GM12878 (cell line): ENCODE measurements at regions of chr7 and their contacts with region 1.

Region 1: GRCh38 chr7:94087664-94088352 is 83.7 kb upstream of the BET1 start:
- DNase-seq: peak; percentile 66
- ATAC-seq: peak; percentile 97
- H3K4me3 ChIP-seq: no peak overlapping the region
- H3K27ac ChIP-seq: no peak overlapping the region
- H3K4me1 ChIP-seq: no peaks in the 10 kb centered on the region
- H3K27me3 ChIP-seq: no peaks in the 10 kb centered on the region; a peak in 1 of 4 replicates
- CTCF ChIP-seq: peak; percentile 77 to 89 (median 87); a peak in 5 of 6 replicates
- EP300 ChIP-seq: no peak
- POLR2A ChIP-seq: no peak
- RAD21 ChIP-seq: peak; percentile 96

Region 2: DNA sequence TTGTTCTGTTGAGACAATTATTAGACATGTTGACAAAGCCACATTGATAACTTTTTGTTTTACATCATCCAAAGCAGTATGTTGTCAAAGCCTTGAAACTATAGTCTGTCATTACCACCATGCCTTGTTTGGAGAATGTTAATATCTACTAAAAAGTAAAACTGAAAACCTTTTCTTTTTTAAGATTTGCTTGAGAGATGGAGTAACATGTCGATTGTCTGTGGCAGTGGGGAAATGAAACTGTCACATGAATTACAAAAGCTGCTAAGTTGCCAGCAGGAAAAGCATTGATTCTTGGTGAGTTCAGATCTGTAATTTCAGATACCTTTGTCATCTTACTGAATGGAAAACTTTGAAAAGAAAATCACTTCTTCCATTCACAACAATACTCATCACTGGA is 266.3 kb before region 1 on chr7:
- CTCF ChIA-PET with region 1: no interaction called
- POLR2A ChIA-PET with region 1: no interaction called
- RAD21 ChIA-PET with region 1: no interaction called
- SMC1A ChIA-PET with region 1: interaction called, 3 read pairs
- in situ Hi-C with region 1: no loop called
- intact Hi-C with region 1: loop called (anchors 5 kb)
- DNase-seq: no peak
- ATAC-seq: peak; percentile 42; the same call in 2 of the 3 replicates
- H3K4me3 ChIP-seq: no peak overlapping the region
- H3K27ac ChIP-seq: no peak overlapping the region
- H3K4me1 ChIP-seq: no peaks in the 10 kb centered on the region
- H3K27me3 ChIP-seq: no peaks in the 10 kb centered on the region
- CTCF ChIP-seq: no peak
- EP300 ChIP-seq: no peak
- POLR2A ChIP-seq: no peak
- RAD21 ChIP-seq: no peak

Region 3: GRCh38 chr7:93921607-93922566 is 165.9 kb before region 1 on chr7 and contains the start of gene GNG11:
- CTCF ChIA-PET with region 1: interaction called, 25 read pairs
- POLR2A ChIA-PET with region 1: no interaction called
- RAD21 ChIA-PET with region 1: interaction called, 12 read pairs
- SMC1A ChIA-PET with region 1: interaction called, 22 read pairs
- in situ Hi-C with region 1: no loop called
- intact Hi-C with region 1: no loop called
- DNase-seq: no peak
- ATAC-seq: peak; percentile 84
- H3K4me3 ChIP-seq: peak within 1 kb of the TSS; percentile 61
- H3K27ac ChIP-seq: peak within 1 kb of the TSS; percentile 24; the same call in 1 of the 2 replicates
- H3K4me1 ChIP-seq: no peaks in the 10 kb centered on the region
- H3K27me3 ChIP-seq: no peaks in the 10 kb centered on the region
- CTCF ChIP-seq: peak in 1 of 3 experiments; percentile 21; a peak in 1 of 6 replicates
- EP300 ChIP-seq: no peak
- POLR2A ChIP-seq: no peak
- RAD21 ChIP-seq: no peak
- polyA plus RNA-seq, gene GNG11: 2.0 to 2.3 TPM

Region 4: DNA sequence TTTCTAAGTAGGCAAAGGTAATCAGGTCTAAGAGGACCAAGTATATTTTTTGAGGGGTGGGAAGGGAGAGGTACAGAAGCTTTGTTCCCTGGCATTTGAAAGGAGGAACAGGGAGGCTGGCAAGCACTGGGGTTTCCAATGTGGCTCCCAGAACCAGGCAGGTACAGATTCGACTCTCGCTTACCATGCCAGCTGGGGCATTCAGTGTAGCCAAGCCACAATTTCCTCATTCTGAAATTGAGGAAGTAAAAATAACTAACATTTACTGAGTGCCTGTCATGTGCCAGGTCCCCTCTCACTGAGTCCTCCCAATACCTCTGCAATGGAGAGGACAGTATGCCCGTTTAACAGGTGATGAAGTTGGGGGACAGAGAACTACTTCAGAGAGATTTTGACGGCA is 37.8 kb before region 1 on chr7:
- CTCF ChIA-PET with region 1: interaction called, 7 read pairs
- POLR2A ChIA-PET with region 1: interaction called, 6 read pairs
- RAD21 ChIA-PET with region 1: interaction called, 13 read pairs
- SMC1A ChIA-PET with region 1: interaction called, 24 read pairs
- in situ Hi-C with region 1: no loop called
- intact Hi-C with region 1: no loop called
- DNase-seq: peak; percentile 63
- ATAC-seq: peak; percentile 89
- H3K4me3 ChIP-seq: no peak overlapping the region
- H3K27ac ChIP-seq: peak overlapping the region; percentile 27; the same call in 1 of the 2 replicates
- H3K4me1 ChIP-seq: peaks cover 23% of the 10 kb centered on the region
- H3K27me3 ChIP-seq: no peaks in the 10 kb centered on the region
- CTCF ChIP-seq: no peak
- EP300 ChIP-seq: peak; percentile 38 to 41; a peak in 2 of 4 replicates
- POLR2A ChIP-seq: no peak
- RAD21 ChIP-seq: no peak

Region 5: GRCh38 chr7:94111009-94111408 is 23.2 kb after region 1 on chr7:
- CTCF ChIA-PET with region 1: interaction called, 3 read pairs
- POLR2A ChIA-PET with region 1: no interaction called
- RAD21 ChIA-PET with region 1: interaction called, 4 read pairs
- SMC1A ChIA-PET with region 1: interaction called, 10 read pairs
- in situ Hi-C with region 1: no loop called
- intact Hi-C with region 1: no loop called
- DNase-seq: no peak
- ATAC-seq: peak; percentile 65
- H3K4me3 ChIP-seq: no peak overlapping the region
- H3K27ac ChIP-seq: no peak overlapping the region
- H3K4me1 ChIP-seq: no peaks in the 10 kb centered on the region
- H3K27me3 ChIP-seq: no peaks in the 10 kb centered on the region
- CTCF ChIP-seq: no peak
- EP300 ChIP-seq: no peak
- POLR2A ChIP-seq: no peak
- RAD21 ChIP-seq: no peak

Region 6: DNA sequence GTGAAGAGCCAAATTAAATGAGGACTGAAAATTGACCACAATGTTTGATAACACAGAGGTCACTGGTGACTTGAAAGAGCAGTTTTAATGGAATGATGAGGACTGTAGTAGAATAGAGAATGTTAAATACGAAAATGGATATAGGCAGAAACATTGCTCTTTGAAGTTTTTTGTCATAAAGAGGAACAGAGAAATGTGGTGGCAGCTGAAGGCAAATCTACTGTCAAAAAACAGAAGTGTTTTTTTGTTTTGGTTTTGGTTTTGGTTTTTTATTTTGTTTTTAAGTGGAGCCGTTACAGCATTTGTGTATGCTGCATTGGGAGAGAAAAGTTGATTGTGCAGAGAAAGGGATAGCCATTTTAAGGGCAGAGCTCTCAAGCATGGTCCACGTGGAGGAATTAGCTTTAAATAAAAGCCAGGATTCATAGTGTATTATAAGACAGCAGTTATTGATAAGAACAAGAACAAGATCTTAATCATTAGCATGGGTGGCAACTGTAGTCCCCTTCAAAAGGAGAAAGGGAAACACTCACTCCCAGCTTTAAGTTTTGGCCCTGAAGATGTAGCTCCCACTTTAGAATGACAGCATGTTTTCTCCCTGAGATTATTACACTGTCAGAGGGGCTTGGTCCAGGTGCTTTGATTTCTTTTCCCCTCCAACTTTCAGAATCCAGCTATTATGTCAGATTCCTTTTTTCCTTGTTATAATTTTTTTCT is 73.1 kb after region 1 on chr7:
- CTCF ChIA-PET with region 1: interaction called, 7 read pairs
- POLR2A ChIA-PET with region 1: no interaction called
- RAD21 ChIA-PET with region 1: no interaction called
- SMC1A ChIA-PET with region 1: interaction called, 12 read pairs
- in situ Hi-C with region 1: no loop called
- intact Hi-C with region 1: no loop called
- DNase-seq: peak; percentile 83
- ATAC-seq: peak; percentile 97
- H3K4me3 ChIP-seq: peak overlapping the region; percentile 25; the same call in 1 of the 2 replicates
- H3K27ac ChIP-seq: peak overlapping the region; percentile 37
- H3K4me1 ChIP-seq: peaks cover 6% of the 10 kb centered on the region
- H3K27me3 ChIP-seq: no peaks in the 10 kb centered on the region
- CTCF ChIP-seq: no peak
- EP300 ChIP-seq: peak; percentile 98 to 99
- POLR2A ChIP-seq: no peak
- RAD21 ChIP-seq: no peak